GM18951 (cell line): ENCODE measurements at regions of chr20 and their contacts with region 1.

Region 1: DNA sequence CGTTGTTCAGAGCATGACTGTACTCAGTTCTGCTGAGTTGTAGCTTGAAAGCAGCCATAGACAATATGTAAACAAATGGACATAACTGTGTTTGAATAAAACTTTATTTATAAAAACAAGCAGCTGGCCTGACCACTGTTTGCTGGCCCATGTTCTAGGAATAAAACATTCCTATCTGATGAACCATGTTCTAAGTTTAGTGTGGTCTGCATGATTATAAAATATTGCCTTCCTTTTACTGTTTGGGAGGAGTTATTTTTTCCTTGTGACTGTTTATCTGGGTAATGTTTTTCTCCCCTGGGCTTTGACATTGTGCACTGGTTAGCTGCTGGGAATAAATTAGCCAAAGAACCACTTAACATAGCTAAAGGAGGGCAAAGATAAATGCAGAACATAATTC is 55.1 kb downstream of the CDS2 start:
- POLR2A ChIP-seq: no peak

Region 2: GRCh38 chr20:5020760-5021159 is 161.2 kb before region 1 on chr20:
- in situ Hi-C with region 1: no loop called
- POLR2A ChIP-seq: no peak

Region 3: DNA sequence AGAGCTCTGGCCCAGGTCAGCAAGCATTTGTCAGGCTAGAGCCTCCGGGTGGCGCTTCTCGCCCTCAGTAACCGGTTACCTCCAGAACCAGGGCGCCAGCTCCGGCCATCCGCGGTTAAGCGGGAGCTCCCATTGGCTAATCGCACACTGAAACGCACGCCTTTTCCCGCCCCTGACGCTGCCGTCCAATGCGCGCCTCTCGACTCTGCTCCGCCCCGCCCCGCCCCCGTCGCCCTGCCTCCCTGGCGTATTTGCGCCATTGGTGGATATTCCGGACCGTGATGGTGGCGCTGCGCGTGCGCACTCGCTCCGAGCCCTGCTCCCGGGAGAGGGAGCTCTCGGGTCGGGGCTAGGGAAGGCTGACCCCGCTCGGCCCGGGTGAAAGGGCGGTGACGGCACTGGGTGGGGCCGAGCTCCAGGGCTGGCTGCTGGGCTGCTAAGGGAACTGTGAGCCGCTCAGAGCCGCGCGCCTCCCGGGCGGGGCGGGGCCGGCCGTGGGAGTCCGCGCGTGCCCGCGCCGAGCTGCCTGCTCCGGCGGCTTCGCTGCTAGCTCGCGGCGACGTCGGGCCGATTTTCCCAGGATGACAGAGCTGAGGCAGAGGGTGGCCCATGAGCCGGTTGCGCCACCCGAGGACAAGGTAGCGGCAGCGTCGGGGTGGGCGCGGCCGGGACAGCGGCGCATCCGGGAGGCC is 55.3 kb before region 1 on chr20 and contains the start of gene CDS2:
- in situ Hi-C with region 1: loop called (anchors 10 kb)
- POLR2A ChIP-seq: peak; percentile 74